ENCODE measurements at regions of chr1 and their contacts with region 1.

Region 1: GRCh38 chr1:50929376-50929958 is 30.6 kb downstream of the FAF1 start:
- DNase-seq: peak; percentile 64
- ATAC-seq: no peak
- H3K4me3 ChIP-seq: no peak overlapping the region
- H3K27ac ChIP-seq: no peak overlapping the region
- H3K4me1 ChIP-seq: no peaks in the 10 kb centered on the region
- H3K27me3 ChIP-seq: no peaks in the 10 kb centered on the region
- CTCF ChIP-seq: peak; percentile 78

Region 2: DNA sequence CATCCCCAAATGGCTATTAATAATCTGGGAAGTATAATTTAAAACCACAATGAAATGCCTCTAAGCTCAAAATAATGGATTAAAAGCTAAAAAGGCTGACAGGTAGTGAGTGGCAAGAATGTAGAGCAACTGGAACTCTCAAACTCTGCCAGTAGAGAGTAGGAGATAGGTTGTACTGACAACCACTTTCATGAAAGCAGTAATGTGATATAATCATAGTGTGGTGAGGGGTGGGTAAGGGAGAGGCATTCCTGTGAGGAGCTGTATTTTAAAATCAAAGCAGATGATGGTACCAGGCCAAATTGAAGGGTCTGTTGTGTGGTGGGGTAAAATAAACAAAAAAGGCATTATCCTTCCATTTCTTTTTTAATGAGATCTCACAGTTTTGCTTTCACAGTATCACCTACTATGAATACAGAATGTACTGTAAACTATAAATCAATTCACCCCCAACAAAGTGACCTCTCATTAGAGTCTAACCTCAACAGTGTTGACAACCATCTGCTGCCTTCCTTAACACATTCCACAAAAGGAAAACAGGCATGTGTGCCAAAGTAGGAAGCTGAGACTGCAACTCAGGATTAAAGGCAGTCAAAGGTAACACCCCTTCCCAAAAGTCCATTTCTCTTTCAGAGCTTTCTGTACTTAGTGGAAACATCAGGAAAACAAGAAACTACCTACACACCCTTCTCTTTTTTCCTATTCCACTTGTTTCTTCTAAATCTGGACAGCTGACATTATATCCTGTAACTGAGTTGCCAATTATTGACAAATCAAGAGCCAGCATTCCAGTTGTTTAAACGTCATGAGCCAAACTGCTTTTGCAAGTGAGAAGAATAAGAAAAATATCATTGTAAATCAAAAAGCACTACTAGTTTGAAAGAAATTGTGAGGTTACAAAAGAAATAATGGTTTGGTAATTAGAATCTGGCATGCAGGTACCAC is 100.2 kb before region 1 on chr1:
- CTCF ChIA-PET with region 1: no interaction called
- POLR2A ChIA-PET with region 1: no interaction called
- intact Hi-C with region 1: no loop called
- DNase-seq: no peak
- ATAC-seq: no peak
- H3K4me3 ChIP-seq: no peak overlapping the region
- H3K27ac ChIP-seq: no peak overlapping the region
- H3K4me1 ChIP-seq: no peaks in the 10 kb centered on the region
- H3K27me3 ChIP-seq: no peaks in the 10 kb centered on the region
- CTCF ChIP-seq: no peak

Region 3: DNA sequence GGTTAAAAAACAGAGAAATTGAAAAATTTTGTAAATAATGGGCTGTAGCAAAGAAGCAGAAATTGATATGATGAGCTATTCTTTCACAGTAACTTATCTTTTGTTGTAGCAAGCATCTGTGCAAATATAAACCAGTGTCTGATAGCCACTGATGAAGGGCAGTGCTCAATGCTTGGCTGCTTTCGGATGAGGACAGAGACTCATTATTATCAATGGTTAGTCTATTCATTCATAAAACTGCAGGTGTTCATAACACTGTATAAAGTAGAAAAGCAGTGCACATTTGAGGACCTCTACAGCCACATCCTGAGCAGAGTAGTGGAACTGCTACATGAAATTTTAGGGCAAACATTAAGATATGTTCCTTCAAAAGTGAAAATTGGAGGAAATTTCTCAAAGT is 76.6 kb before region 1 on chr1:
- CTCF ChIA-PET with region 1: no interaction called
- POLR2A ChIA-PET with region 1: no interaction called
- intact Hi-C with region 1: no loop called
- DNase-seq: no peak
- ATAC-seq: no peak
- H3K4me3 ChIP-seq: no peak overlapping the region
- H3K27ac ChIP-seq: no peak overlapping the region
- H3K4me1 ChIP-seq: no peaks in the 10 kb centered on the region
- H3K27me3 ChIP-seq: no peaks in the 10 kb centered on the region
- CTCF ChIP-seq: no peak

Region 4: DNA sequence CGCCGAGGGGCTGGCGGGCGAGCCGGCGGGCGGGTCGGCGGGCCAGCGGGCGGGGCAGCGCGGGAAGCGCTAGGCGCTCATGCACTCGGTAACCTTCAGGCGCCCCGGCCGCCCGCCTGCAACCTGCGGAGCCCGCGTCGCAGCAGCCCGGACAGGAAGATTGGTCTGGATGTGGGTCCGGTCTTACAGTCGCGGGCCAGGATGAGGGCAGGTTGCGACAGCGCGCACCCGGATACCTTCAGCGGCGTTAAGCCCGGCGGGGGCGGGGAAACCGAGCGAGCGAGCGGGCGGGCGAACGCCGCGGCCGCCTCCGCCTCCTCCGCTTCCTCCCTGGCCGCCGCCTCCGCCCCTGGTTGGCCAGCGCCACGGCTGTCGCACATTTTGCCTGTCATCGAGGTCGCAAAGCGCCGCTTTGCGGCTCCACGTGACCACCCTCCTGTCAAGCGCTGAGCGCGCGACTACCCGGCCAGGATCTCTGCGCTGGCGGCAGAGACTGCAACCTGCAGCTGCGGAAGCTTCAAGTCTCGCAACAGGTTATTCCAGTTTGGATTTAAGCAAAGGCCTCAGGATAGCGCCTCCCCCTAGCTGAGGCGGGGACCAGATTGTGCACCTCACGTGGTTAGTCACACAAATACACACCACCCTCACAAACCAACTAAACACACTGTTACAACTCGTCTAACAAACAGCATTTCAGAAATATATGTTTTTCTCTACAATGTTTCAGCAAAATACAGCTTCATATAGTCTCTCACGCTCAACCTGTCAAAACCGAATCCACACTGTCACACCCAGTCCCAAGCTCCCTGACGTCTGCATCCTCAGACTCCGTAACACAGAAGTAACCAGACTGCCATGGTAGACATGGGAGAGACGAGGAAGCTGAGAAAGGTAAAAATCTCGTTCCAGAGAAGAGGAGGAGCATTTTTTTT is 30.7 kb after region 1 on chr1 and contains the start of gene FAF1:
- CTCF ChIA-PET with region 1: interaction called, 4 read pairs
- POLR2A ChIA-PET with region 1: no interaction called
- intact Hi-C with region 1: loop called (anchors 2 kb)
- DNase-seq: peak; percentile 99
- ATAC-seq: peak; percentile 84
- H3K4me3 ChIP-seq: peak within 1 kb of the TSS; percentile 97
- H3K27ac ChIP-seq: peak within 1 kb of the TSS; percentile 81
- H3K4me1 ChIP-seq: peaks cover 7% of the 10 kb centered on the region; the same call in 1 of the 2 replicates
- H3K27me3 ChIP-seq: no peaks in the 10 kb centered on the region
- CTCF ChIP-seq: peak; percentile 49
- total RNA-seq, gene FAF1: 12.7 and 14.7 TPM in 2 replicates

Region 5: GRCh38 chr1:50978144-50978851 is 48.8 kb after region 1 on chr1:
- CTCF ChIA-PET with region 1: no interaction called
- POLR2A ChIA-PET with region 1: no interaction called
- intact Hi-C with region 1: no loop called
- DNase-seq: peak; percentile 74
- ATAC-seq: peak; percentile 53
- H3K4me3 ChIP-seq: peak overlapping the region; percentile 85
- H3K27ac ChIP-seq: peak overlapping the region; percentile 49
- H3K4me1 ChIP-seq: peaks cover 42% of the 10 kb centered on the region
- H3K27me3 ChIP-seq: no peaks in the 10 kb centered on the region
- CTCF ChIP-seq: no peak

Region 6: GRCh38 chr1:51044834-51045233 is 115.4 kb after region 1 on chr1:
- CTCF ChIA-PET with region 1: no interaction called
- POLR2A ChIA-PET with region 1: no interaction called
- intact Hi-C with region 1: loop called (anchors 5 kb)
- DNase-seq: peak; percentile 50
- ATAC-seq: no peak
- H3K4me3 ChIP-seq: no peak overlapping the region
- H3K27ac ChIP-seq: no peak overlapping the region
- H3K4me1 ChIP-seq: no peaks in the 10 kb centered on the region
- H3K27me3 ChIP-seq: no peaks in the 10 kb centered on the region
- CTCF ChIP-seq: peak; percentile 58

Measured in PC-3 (cell line).